Activated CD8-positive, alpha-beta T cell treated with anti-CD3 and anti-CD28 coated beads for 36 hours (primary cell): ENCODE measurements at regions of chr19 and their contacts with region 1.

Region 1: GRCh38 chr19:10027158-10027693 is 13.9 kb downstream of the RDH8 start:
- DNase-seq: no peak
- ATAC-seq: no peak
- H3K4me3 Mint-ChIP-seq: no peak overlapping the region
- H3K27ac Mint-ChIP-seq: no peak overlapping the region
- H3K4me1 Mint-ChIP-seq: peaks cover 4% of the 10 kb centered on the region
- H3K27me3 Mint-ChIP-seq: peaks cover 11% of the 10 kb centered on the region
- CTCF ChIP-seq: no peak

Region 2: DNA sequence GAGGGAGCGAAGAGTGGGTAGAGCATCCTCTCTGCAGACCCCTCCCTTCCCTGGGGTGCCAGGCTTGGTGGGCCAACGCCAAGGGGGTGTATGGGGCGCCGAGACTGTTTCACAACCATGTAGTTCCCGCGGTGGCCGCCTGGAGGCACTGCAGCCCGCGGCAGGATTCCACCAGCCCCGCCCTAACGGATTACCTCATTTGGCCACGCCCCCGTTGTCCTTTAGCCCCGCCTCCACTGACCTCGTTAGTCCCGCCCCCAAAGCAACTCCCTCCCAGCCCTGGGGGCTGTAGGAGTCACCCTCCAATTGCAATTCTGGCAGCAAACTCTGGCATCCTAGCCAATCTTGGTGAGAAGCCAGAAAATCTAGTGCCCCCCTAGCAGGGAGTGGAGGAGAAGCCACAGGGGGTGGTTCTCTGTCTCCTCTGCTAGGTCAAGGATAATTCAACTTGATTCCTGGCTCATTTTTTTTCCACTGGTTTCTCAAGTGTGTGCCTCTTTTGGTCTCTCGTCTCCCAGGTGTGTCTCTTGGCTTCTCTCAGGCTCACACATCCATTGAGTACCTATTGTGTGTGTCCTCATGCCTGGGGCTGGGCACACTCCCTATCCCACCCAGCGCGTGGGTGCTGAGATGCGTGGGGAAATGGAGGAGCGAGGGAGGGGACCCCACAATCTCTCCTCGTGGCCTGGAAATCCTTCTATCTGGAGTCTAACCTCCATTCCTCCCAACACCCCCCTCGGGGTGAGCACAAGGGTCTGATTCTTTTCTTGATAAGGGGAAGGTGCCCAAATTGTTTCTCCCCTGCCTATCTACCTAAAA is 92.9 kb before region 1 on chr19:
- CTCF ChIA-PET with region 1: interaction called, 100 read pairs
- POLR2A ChIA-PET with region 1: no interaction called
- intact Hi-C with region 1: loop called (anchors 2 kb)
- DNase-seq: peak; percentile 93
- ATAC-seq: peak; percentile 95
- H3K4me3 Mint-ChIP-seq: no peak overlapping the region
- H3K27ac Mint-ChIP-seq: no peak overlapping the region
- H3K4me1 Mint-ChIP-seq: peaks cover 24% of the 10 kb centered on the region
- H3K27me3 Mint-ChIP-seq: peaks cover 49% of the 10 kb centered on the region
- CTCF ChIP-seq: peak; percentile 96

Region 3: DNA sequence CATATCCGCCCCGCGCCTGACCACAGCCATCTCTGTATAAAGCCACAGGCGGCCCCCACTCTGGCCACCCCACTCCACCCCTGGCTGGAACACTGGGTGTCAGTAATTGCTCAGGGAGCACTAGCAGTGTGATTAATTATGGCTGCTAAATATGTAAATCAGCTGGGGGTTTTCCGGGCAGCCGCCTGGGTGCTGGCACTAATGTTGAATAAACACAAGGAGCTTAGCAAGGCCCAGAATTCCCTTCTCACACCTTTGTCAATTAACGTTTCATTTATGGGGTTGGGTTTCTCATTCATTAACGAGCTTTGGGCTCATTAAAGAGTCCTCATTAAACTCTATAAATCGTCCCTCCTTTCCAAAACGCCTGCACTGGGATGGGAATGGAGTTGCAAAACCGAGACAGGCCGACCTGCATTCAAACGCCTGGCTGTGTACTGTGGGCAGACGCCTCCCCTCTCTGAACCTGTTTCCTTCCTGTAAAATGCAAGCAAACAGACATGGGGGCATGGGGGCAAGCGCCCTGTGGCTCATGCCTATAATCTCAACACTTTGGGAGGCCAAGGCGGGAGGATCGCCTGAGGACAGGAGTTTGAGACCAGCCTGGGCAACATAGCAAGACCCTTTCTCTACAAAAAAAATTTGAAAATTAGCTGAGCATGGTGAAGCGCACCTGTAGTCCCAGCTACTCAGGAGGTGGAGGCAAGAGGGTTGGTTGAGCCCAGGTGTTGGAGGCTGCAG is 73.3 kb before region 1 on chr19:
- CTCF ChIA-PET with region 1: interaction called, 10 read pairs
- POLR2A ChIA-PET with region 1: no interaction called
- intact Hi-C with region 1: no loop called
- DNase-seq: no peak
- ATAC-seq: no peak
- H3K4me3 Mint-ChIP-seq: no peak overlapping the region
- H3K27ac Mint-ChIP-seq: no peak overlapping the region
- H3K4me1 Mint-ChIP-seq: no peaks in the 10 kb centered on the region
- H3K27me3 Mint-ChIP-seq: peaks cover 3% of the 10 kb centered on the region
- CTCF ChIP-seq: no peak

Region 4: DNA sequence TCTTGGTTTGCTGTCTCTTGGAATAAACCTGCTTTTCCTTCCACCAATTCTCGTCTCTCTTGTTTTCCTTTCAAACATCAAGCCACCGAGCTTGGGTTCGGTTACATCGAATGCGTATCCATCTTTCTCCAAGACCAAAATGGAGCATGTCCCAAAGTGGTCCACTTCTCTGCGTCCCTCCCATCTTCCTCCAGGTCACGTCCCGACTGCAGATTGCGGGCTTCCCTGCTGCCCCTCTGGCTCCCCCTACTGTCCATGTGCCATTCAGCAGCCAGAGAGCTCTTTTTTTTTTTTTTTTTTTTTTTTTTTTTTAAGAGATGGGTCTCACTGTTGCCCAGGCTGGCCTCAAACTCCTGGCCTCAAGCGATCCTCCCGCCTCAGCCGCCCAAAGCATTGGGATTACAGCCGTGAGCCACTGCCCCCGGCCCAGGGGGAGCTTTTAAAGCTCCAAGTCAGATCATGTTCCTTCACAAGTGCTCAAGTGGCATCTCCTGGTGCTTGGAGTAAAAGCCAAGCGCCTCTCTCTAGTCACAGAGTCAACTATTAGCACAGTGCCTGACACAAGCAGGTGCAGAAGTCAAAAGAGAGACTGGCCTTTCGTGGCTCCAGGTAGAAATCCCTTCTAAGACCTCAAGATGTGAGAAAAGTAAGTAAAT is 26.9 kb before region 1 on chr19:
- CTCF ChIA-PET with region 1: interaction called, 19 read pairs
- POLR2A ChIA-PET with region 1: no interaction called
- intact Hi-C with region 1: no loop called
- DNase-seq: peak; percentile 82
- ATAC-seq: peak; percentile 71
- H3K4me3 Mint-ChIP-seq: no peak overlapping the region
- H3K27ac Mint-ChIP-seq: no peak overlapping the region
- H3K4me1 Mint-ChIP-seq: peaks cover 11% of the 10 kb centered on the region
- H3K27me3 Mint-ChIP-seq: peaks cover 28% of the 10 kb centered on the region
- CTCF ChIP-seq: peak; percentile 87

Region 5: DNA sequence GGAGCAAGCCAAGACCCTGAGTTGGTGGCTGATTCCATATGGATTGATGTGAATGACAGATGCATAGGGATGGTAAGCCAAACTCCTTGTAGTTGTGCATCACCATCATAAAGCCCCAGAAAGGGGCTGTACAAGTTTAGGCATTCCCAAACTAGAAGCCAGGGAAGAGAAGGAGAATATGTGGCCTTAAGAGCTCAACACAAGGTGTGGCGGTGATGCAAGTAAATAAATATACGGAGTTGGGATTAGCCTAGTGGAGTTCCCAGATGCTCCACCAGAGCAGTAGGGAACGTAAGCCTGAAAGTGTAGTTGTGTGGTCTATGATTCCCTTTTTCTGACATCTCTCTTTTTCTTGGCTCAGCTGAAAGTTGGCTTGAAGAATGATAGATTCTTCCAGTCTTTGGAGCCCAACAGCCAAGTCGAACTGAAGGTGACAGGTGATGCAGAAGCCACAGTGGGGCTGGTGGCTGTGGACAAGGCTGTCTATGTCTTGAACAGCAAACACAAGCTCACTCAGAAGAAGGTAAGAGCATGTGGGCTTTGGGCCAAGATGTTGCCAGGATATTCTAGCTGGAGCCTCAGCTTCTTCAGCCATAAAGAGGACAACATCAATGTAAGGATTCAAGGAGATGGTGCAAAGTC is 16.2 kb after region 1 on chr19:
- CTCF ChIA-PET with region 1: interaction called, 10 read pairs
- POLR2A ChIA-PET with region 1: no interaction called
- intact Hi-C with region 1: no loop called
- DNase-seq: no peak
- ATAC-seq: no peak
- H3K4me3 Mint-ChIP-seq: no peak overlapping the region
- H3K27ac Mint-ChIP-seq: no peak overlapping the region
- H3K4me1 Mint-ChIP-seq: no peaks in the 10 kb centered on the region
- H3K27me3 Mint-ChIP-seq: peaks cover 21% of the 10 kb centered on the region
- CTCF ChIP-seq: no peak

Region 6: DNA sequence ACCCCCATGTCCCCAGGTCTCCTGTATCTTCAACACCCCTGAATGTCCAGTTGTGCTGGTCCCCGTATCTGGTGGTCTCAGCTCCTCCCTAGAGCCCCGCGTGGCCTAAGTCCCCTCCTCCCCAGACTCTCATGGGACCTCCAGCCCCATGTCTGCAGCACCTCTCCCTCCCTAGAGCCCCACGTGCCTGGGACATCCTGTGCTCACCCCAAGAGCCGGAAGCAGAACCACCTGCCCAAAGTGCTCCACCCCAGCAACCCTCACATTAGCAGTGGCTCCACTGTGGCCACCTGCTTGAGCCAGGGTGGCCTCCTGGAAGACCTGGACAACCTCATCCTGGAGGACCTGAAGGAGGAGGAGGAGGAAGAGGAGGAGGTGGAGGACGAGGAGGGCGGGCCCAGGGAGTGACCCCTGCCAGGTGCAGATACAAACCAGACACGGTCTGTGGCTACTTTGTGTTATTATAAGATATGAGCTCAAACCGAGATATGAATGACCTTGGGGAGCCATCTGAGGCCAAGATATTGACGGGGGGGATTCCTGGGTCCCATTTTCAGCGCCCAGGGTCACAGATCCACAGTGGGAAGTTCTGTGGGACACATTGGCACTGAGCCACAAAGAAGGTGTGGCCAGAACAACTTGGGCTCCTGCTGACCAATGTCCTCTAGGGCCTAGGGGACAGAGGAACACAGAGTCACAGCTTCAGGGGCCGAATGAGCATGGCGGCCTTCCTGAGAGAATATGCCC is 64.8 kb after region 1 on chr19:
- CTCF ChIA-PET with region 1: no interaction called
- POLR2A ChIA-PET with region 1: no interaction called
- intact Hi-C with region 1: no loop called
- DNase-seq: no peak
- ATAC-seq: no peak
- H3K4me3 Mint-ChIP-seq: no peak overlapping the region
- H3K27ac Mint-ChIP-seq: peak overlapping the region; percentile 13
- H3K4me1 Mint-ChIP-seq: peaks cover 9% of the 10 kb centered on the region
- H3K27me3 Mint-ChIP-seq: no peaks in the 10 kb centered on the region
- CTCF ChIP-seq: no peak